ENCODE measurements at regions of chr4 and their contacts with region 1.

Region 1: GRCh38 chr4:1746265-1746691 is 25.0 kb downstream of the TACC3 start:
- DNase-seq: no peak
- ATAC-seq: peak; percentile 82
- H3K4me3 ChIP-seq: no peak overlapping the region
- H3K27ac ChIP-seq: peak overlapping the region; percentile 34; the same call in 1 of the 2 replicates
- H3K4me1 ChIP-seq: peaks cover 3% of the 10 kb centered on the region; the same call in 1 of the 2 replicates
- H3K27me3 ChIP-seq: no peaks in the 10 kb centered on the region
- CTCF ChIP-seq: no peak

Region 2: DNA sequence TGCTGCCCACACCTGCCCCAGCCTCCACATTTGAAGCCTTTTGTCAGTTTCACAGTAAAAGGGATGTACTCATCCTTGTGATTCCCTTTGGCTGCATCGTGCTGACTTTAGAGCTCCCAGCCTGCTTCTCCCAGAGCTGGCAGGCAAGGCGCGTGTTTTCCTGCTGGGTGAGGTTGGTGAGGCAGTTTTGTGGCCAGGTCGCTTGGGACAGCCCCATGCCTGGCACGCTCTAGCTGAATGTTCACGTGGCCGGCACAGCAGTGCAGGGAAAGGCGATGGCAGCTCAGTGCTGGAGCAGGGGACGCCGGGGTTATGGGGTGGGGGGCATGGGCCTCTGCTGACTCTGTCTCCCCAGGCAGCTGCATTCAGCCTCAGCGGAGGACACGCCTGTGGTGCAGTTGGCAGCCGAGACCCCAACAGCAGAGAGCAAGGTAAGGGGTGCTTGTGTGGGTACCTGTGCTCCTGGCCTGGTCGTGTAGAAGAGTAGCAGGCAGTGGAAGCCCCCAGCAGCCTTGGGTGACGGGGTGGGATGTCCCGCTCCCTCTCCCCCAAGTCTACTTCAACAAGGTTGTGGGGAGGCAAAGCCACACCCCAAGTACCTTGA is 15.6 kb before region 1 on chr4:
- CTCF ChIA-PET with region 1: interaction called, 13 read pairs
- POLR2A ChIA-PET with region 1: interaction called, 4 read pairs
- in situ Hi-C with region 1: no loop called
- intact Hi-C with region 1: no loop called
- DNase-seq: no peak
- ATAC-seq: no peak
- H3K4me3 ChIP-seq: no peak overlapping the region
- H3K27ac ChIP-seq: no peak overlapping the region
- H3K4me1 ChIP-seq: peaks cover 19% of the 10 kb centered on the region
- H3K27me3 ChIP-seq: no peaks in the 10 kb centered on the region
- CTCF ChIP-seq: no peak

Region 3: DNA sequence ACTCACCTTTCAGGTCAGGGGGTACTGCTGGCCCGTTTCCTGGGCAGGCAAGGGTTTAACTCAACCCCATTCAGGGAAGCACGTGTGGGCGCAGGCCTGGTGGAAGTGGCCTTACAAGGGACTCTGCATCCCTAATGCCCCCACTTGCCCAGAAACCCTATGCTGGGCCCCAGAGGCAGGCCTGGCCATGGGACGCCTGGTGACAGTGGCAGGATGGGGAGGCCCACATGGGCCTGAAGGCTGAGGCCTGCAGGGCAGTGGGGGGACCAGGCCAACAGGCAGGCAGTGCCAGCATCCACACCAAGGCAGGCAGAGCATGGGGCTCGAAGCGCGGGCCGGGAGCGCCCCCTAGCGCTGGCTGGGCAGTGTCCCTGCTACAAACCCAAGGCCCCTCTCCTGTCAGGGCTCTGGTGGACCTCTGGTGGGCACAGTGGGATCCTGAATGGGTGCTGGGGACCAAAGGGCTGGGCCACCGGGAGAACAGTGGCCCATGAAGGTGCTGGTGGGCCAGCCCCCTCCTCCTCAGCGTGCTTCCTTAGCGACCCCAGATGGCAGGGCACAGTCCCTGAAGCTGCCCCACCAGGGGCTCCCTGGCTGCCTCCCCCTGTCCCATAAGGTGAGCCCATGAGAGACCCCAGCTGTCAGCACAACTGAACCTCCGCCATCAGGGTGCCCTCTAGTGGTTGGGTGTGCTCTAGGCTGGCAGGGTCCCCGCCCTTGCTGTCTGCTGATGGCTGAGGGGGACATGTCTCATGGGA is 63.7 kb after region 1 on chr4:
- CTCF ChIA-PET with region 1: interaction called, 7 read pairs
- POLR2A ChIA-PET with region 1: interaction called, 6 read pairs
- in situ Hi-C with region 1: no loop called
- intact Hi-C with region 1: loop called (anchors 1 kb)
- DNase-seq: peak; percentile 24
- ATAC-seq: peak; percentile 91
- H3K4me3 ChIP-seq: no peak overlapping the region
- H3K27ac ChIP-seq: no peak overlapping the region
- H3K4me1 ChIP-seq: no peaks in the 10 kb centered on the region
- H3K27me3 ChIP-seq: no peaks in the 10 kb centered on the region
- CTCF ChIP-seq: no peak

Region 4: GRCh38 chr4:1948892-1949436 is 202.7 kb after region 1 on chr4:
- CTCF ChIA-PET with region 1: no interaction called
- POLR2A ChIA-PET with region 1: no interaction called
- in situ Hi-C with region 1: no loop called
- intact Hi-C with region 1: no loop called
- DNase-seq: no peak
- ATAC-seq: no peak
- H3K4me3 ChIP-seq: no peak overlapping the region
- H3K27ac ChIP-seq: no peak overlapping the region
- H3K4me1 ChIP-seq: no peaks in the 10 kb centered on the region
- H3K27me3 ChIP-seq: no peaks in the 10 kb centered on the region
- CTCF ChIP-seq: no peak

Measured in Panc1 (cell line).